Activated T-helper 1 cell treated with anti-CD3 and anti-CD28 coated beads, Interleukin-12 subunit alpha, Interleukin-12 subunit beta, Interleukin-2, Interleukin-4 antibody, amounts not matched to agents 30 ng/mL and 10 ng/mL and 1 ng/mL, durations not matched to agents 14 hours and 24 hours and 36 hours (primary cell): ENCODE measurements at regions of chr11 and their contacts with region 1.

Region 1: DNA sequence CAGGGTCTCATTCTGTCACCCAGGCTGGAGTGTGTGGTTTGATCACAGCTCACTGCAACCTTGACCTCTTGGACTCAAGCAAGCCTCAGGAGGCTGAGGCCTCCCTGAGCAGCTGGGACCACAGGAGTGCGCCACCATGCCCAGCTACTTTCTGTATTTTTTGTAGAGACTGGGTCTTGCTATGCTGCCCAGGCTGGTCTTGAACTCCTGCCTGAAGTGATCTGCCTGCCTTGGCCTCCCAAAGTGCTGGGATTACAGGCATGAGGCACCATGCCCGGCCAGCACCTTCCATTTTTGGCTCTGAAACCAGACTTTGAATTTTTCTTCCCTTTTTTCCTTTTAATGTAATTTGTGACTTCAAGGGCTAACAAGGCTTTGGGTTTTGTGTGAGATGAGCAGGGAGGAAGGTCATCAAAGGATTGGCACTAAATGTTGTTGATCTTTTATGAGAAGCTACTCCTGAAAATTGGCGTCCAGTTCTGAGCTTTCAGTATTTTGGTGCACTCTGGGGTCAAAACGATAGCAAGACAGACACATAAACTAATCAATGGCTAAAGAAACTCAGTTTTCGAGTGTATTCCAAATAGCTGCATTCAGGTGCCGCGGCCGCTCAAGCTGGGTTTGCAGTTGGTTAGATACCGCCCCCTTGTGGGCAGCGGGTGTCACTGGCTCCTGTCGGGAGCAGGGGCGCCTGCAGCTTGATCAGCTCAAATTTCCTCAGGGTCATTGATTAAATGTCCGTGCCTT is 51.9 kb upstream of the CLMP start:
- DNase-seq: peak; percentile 71
- H3K4me3 Mint-ChIP-seq: no peak overlapping the region
- H3K27ac Mint-ChIP-seq: no peak overlapping the region
- H3K4me1 Mint-ChIP-seq: peaks cover 13% of the 10 kb centered on the region
- H3K27me3 Mint-ChIP-seq: peaks cover 26% of the 10 kb centered on the region

Region 2: DNA sequence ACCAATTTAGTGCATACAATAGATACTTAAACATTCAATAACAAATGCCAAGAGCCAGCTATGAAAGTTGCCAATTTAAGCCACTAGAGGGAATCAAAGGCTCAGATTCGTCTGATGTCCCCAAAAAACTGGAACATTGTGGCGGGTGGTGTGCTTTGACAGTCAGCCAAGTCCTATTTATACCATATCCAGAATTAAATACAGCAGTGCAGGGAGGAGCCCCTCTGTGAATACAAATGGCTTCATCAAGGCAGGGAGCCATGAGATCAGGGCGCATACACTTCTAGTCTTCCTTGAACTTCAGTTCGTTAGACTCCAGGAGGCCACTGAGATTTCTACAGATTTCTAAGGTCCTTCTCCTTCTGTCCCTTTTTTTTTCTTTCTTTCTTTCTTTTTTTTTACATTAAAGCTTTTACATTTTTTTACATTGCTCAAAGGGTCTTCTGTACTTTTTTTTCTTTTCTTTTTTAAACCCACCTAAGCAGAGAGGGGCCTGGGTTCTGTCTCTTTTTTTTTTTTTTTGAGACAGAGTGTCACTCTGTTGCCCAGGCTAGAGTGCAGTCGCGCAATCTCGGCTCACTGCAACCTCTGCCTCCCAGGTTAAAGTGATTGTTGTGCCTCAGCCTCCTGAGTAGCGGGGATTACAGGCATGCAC is 143.5 kb before region 1 on chr11:
- intact Hi-C with region 1: loop called (anchors 1 kb)
- DNase-seq: peak; percentile 14
- H3K4me3 Mint-ChIP-seq: no peak overlapping the region
- H3K27ac Mint-ChIP-seq: no peak overlapping the region
- H3K4me1 Mint-ChIP-seq: peaks cover 30% of the 10 kb centered on the region
- H3K27me3 Mint-ChIP-seq: peaks cover 14% of the 10 kb centered on the region

Region 3: DNA sequence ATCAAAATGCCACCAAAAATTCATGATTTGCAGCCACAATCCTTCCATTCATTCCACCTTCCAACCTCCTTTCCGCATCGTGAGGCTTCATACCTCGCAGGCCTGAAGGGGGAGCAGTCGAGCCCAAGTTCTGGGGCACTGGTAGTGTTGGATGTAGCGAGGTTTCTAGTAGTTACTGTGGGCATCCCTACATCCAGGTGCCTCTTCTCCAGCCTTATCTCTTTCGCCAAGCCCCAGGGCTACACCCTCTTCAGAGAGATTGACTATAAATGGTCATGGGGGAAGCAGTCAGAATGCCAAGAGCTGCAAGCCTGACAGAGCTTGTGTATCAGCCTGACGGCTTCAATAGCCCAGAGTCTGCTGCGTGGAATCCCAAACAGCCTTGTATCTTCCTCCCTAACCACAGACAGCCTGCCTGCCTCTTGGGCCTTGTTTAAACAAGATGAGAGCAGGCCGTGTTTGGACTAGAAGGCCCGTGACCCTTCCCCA is 80.8 kb before region 1 on chr11:
- intact Hi-C with region 1: loop called (anchors 1 kb)
- DNase-seq: no peak
- H3K4me3 Mint-ChIP-seq: no peak overlapping the region
- H3K27ac Mint-ChIP-seq: no peak overlapping the region
- H3K4me1 Mint-ChIP-seq: no peaks in the 10 kb centered on the region
- H3K27me3 Mint-ChIP-seq: peaks cover 12% of the 10 kb centered on the region

Region 4: GRCh38 chr11:123261345-123262106 is 14.6 kb after region 1 on chr11:
- intact Hi-C with region 1: no loop called
- DNase-seq: peak; percentile 59
- H3K4me3 Mint-ChIP-seq: no peak overlapping the region
- H3K27ac Mint-ChIP-seq: no peak overlapping the region
- H3K4me1 Mint-ChIP-seq: peaks cover 22% of the 10 kb centered on the region
- H3K27me3 Mint-ChIP-seq: peaks cover 17% of the 10 kb centered on the region

Region 5: DNA sequence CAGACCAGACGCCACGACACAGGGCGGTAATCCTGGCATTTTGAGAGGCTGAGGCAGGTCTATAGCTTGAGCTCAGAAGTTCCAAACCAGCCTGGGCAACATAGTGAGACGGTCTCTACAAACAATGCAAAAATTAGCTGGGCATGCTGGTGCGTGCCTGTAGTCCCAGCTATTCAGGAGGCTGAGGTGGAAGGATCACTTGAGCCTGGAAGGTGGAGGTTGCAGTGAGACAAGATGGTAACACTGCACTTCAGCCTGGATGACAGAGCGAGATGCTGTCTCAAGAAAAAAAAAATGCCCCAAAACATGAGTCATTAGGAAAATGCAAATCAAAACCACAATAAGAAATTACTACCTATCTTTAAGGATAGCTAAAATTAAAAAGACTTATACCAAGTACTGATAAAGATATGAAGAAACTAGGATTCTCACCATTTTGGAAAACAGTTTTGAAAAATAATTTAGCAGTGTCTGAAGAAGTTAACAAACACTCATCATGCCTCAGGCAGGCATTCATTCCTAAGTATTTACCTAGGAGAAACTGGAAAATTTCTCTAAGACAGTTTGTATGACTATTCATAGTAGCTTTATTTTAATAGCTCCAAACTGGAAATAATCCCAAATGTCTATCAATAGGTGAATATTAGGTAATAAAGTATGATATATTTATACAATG is 91.5 kb after region 1 on chr11:
- intact Hi-C with region 1: no loop called
- DNase-seq: no peak
- H3K4me3 Mint-ChIP-seq: no peak overlapping the region
- H3K27ac Mint-ChIP-seq: no peak overlapping the region
- H3K4me1 Mint-ChIP-seq: peaks cover 12% of the 10 kb centered on the region
- H3K27me3 Mint-ChIP-seq: peaks cover 9% of the 10 kb centered on the region

Region 6: DNA sequence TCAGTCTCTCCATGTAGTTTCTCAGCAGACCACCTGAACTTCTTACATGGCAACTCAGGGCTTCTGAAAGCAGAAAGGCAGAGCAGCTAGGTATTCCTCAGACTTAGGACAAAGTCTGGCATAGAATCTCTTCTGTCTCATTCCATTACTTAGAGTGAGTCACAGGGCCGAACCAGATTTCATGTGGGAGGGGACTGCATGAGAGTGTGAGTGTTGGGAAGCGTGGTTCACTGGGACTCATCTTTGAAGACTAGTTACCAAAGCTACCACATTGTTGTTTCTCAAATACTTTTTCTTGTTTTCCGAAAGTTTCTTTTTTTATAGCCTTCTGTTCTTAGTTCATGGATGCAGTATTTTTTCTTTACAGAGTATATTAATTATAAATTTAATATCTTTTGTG is 443.6 kb after region 1 on chr11:
- intact Hi-C with region 1: no loop called
- DNase-seq: no peak
- H3K4me3 Mint-ChIP-seq: no peak overlapping the region
- H3K27ac Mint-ChIP-seq: no peak overlapping the region
- H3K4me1 Mint-ChIP-seq: peaks cover 5% of the 10 kb centered on the region
- H3K27me3 Mint-ChIP-seq: peaks cover 18% of the 10 kb centered on the region